ENCODE measurements at regions of chr2 and their contacts with region 1.

Region 1: DNA sequence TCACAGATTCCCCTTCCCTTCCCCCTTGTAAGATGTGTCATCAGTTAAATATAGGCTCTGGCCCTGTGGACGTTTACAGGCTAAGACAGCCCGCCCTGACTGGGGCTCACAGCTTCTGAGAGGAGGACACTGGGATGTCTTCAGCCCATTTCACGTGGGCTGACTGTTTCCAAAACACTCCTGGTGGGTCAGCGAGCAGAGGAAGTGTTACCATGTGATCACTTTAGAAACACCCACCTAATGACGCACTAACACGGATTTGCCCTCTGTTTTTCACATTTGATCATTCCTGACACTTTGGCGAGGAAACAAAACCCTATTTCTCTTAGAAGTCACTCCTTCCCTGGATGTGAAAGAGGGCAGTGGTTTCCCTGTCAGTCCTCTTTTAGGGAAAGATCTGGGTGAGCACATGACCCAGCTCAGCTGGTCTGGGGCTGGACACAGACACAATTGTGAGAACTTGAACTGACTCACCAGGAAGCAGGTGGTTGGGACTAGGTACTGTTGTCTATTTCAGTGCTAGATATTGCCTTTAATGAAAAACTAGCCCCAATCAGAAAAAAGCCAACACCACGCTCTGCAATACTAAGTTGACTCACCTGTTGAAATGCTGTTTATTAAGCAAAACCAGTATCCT is 38.8 kb downstream of the BMP10 start:
- DNase-seq: peak; percentile 29 to 77 (median 50)
- ATAC-seq: peak; percentile 71
- H3K4me3 ChIP-seq: no peak overlapping the region
- H3K27ac ChIP-seq: peak overlapping the region; percentile 78
- H3K4me1 ChIP-seq: peaks cover 23 to 64% of the 10 kb centered on the region in 2 experiments
- H3K27me3 ChIP-seq: no peaks in the 10 kb centered on the region
- CTCF ChIP-seq: no peak
- EP300 ChIP-seq: no peak; the same call in 1 of the 2 replicates
- POLR2A ChIP-seq: 0 out of 2 replicates have a peak, but pooled peaks have one; percentile 42
- RAD21 ChIP-seq: no peak

Region 2: GRCh38 chr2:68467077-68467960 is 365.0 kb before region 1 on chr2 and contains the starts of genes APLF and FBXO48:
- CTCF ChIA-PET with region 1: no interaction called
- POLR2A ChIA-PET with region 1: no interaction called
- in situ Hi-C with region 1: loop called (anchors 10 kb)
- intact Hi-C with region 1: loop called (anchors 2 kb)
- DNase-seq: peak; percentile 87 to 99 (median 92)
- ATAC-seq: peak; percentile 97
- H3K4me3 ChIP-seq: peak within 1 kb of the TSS; percentile 76
- H3K27ac ChIP-seq: peak within 1 kb of the TSS; percentile 85
- H3K4me1 ChIP-seq: peaks cover 8 to 30% of the 10 kb centered on the region in 2 experiments; a peak in 4 of 5 replicates
- H3K27me3 ChIP-seq: no peaks in the 10 kb centered on the region; a peak in 1 of 5 replicates
- CTCF ChIP-seq: no peak
- EP300 ChIP-seq: peak; percentile 13; the same call in 1 of the 2 replicates
- POLR2A ChIP-seq: peak; percentile 79
- RAD21 ChIP-seq: no peak
- polyA plus RNA-seq, gene APLF: 0.07 to 0.15 TPM
- polyA plus RNA-seq, gene FBXO48: 0.74 to 0.79 TPM

Region 3: DNA sequence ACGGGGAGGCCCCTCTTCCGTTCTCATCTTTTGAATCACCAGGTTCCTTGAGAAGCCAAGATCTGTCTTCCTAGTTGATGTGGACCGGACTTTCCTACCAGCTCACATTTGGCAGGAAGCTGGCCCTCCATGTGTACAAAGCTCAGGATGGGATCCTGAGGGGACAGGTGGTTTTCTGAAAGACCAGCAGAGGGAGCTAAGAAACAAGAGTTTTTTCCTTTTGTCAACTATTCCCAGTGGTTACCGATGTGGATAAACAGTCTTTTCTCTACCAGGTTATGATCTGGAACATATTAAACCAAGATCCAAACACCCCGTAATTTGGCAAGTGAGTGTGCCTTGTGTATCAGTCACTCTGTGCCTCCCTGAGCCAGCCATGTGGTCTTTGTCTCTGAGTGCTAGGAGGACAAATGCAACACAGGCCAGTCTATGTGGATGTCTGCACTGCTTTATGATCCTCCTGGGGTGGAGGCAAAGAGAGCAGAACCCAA is 122.9 kb before region 1 on chr2:
- CTCF ChIA-PET with region 1: interaction called, 3 read pairs
- POLR2A ChIA-PET with region 1: no interaction called
- in situ Hi-C with region 1: no loop called
- intact Hi-C with region 1: loop called (anchors 1 kb)
- DNase-seq: peak; percentile 25 to 62 (median 43)
- ATAC-seq: peak; percentile 94
- H3K4me3 ChIP-seq: no peak overlapping the region
- H3K27ac ChIP-seq: no peak overlapping the region
- H3K4me1 ChIP-seq: no peaks in the 10 kb centered on the region; a peak in 1 of 5 replicates
- H3K27me3 ChIP-seq: no peaks in the 10 kb centered on the region; a peak in 1 of 5 replicates
- CTCF ChIP-seq: peak; percentile 56 to 81 (median 76); a peak in 5 of 6 replicates
- EP300 ChIP-seq: no peak
- POLR2A ChIP-seq: no peak
- RAD21 ChIP-seq: peak; percentile 75 to 83

Region 4: DNA sequence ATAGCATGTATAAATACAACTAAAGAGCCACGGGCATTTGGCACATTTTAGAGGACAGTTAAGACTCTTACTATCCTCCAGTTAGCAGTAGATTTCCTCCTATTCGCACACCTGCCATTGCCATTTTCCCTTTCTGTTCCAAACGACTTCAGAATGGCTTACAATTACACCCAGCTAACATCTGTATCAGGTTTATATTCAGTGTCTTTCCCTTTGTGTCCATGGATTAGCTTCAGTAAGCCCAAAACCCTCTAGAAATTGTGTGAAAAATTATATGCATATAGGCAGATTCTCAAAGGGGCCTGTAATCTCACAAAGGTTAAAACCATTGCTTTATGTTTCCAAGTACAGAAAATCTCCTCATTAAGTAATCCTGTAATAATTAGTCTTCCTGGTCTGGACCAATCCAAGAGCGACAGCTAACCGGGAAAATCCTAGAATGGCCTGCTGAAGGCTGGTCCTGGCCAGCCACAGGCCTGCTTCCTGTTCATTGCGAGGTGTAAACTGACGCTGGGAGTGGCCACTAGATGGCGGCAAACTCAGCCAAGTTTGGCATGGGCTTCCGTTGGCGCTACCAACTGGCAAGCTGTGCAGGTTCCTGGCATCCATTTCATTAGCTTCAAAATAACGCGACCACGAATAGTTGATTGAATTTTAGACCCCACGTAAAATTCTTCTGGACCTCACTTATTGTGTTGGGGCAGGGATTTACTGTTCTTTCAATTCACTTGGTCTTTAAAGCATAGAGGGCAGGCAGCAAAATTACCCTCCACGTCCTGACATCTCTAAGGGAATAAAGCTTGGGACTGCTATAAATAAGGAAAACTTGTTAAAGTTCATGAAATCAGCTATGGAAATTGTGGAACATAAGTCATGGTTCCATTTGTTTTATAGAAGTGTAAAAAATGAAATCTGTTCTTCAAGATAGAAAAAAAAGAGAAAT is 80.7 kb before region 1 on chr2:
- CTCF ChIA-PET with region 1: interaction called, 10 read pairs
- POLR2A ChIA-PET with region 1: no interaction called
- in situ Hi-C with region 1: no loop called
- intact Hi-C with region 1: loop called (anchors 1 kb)
- DNase-seq: peak; percentile 76 to 87 (median 77)
- ATAC-seq: peak; percentile 98
- H3K4me3 ChIP-seq: no peak overlapping the region
- H3K27ac ChIP-seq: no peak overlapping the region
- H3K4me1 ChIP-seq: peaks cover 0 to 12% of the 10 kb centered on the region in 2 experiments; a peak in 2 of 5 replicates
- H3K27me3 ChIP-seq: no peaks in the 10 kb centered on the region
- CTCF ChIP-seq: peak; percentile 91 to 95 (median 95)
- EP300 ChIP-seq: no peak
- POLR2A ChIP-seq: no peak
- RAD21 ChIP-seq: peak; percentile 91 to 95

Region 5: DNA sequence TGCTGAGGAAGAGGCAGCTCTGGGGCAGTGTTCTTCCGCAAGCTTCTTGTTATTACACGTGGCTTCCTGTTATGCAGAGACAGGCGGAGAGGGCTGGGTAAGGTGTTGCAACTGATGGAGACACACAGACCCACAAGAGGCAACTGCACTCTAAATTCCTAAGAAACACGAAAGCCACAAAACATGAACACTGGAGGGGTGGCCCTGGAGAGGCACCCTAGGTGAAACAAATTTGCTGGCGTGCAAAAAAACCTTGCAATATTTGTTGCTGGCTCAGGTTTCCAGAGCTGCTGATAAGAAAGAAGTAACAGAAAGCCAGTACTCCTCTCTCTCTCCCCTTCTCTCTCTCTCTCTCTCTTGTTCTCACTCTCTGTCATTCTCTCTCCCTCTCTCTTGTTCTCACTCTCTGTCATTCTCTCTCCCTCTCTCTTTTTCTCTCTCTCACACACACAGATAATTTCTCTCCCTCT is 65.9 kb before region 1 on chr2:
- CTCF ChIA-PET with region 1: no interaction called
- POLR2A ChIA-PET with region 1: no interaction called
- in situ Hi-C with region 1: no loop called
- intact Hi-C with region 1: loop called (anchors 5 kb)
- DNase-seq: peak in 1 of 4 experiments; percentile 46
- ATAC-seq: peak; percentile 70
- H3K4me3 ChIP-seq: no peak overlapping the region
- H3K27ac ChIP-seq: peak overlapping the region; percentile 36; the same call in 1 of the 3 replicates
- H3K4me1 ChIP-seq: peaks cover 8 to 81% of the 10 kb centered on the region in 2 experiments
- H3K27me3 ChIP-seq: no peaks in the 10 kb centered on the region
- CTCF ChIP-seq: no peak
- EP300 ChIP-seq: peak; percentile 5; the same call in 1 of the 2 replicates
- POLR2A ChIP-seq: no peak
- RAD21 ChIP-seq: no peak

Region 6: GRCh38 chr2:68811364-68811763 is 21.0 kb before region 1 on chr2:
- CTCF ChIA-PET with region 1: no interaction called
- POLR2A ChIA-PET with region 1: no interaction called
- in situ Hi-C with region 1: no loop called
- intact Hi-C with region 1: loop called (anchors 1 kb)
- DNase-seq: no peak
- ATAC-seq: no peak
- H3K4me3 ChIP-seq: no peak overlapping the region
- H3K27ac ChIP-seq: no peak overlapping the region
- H3K4me1 ChIP-seq: peaks cover 0 to 5% of the 10 kb centered on the region in 2 experiments; a peak in 2 of 5 replicates
- H3K27me3 ChIP-seq: no peaks in the 10 kb centered on the region
- CTCF ChIP-seq: no peak
- EP300 ChIP-seq: no peak
- POLR2A ChIP-seq: no peak
- RAD21 ChIP-seq: no peak